CD8-positive, alpha-beta T cell (primary cell): ENCODE measurements at regions of chr1 and their contacts with region 1.

Region 1: GRCh38 chr1:207004981-207005830 is 27.4 kb downstream of the C1orf116 start:
- DNase-seq: peak in 7 of 9 experiments; percentile 9 to 58 (median 41)
- ATAC-seq: peak; percentile 51
- H3K4me3 ChIP-seq: no peak overlapping the region
- H3K4me3 Mint-ChIP-seq: no peak overlapping the region
- H3K27ac ChIP-seq: no peak overlapping the region
- H3K27ac Mint-ChIP-seq: no peak overlapping the region
- H3K4me1 ChIP-seq: no peaks in the 10 kb centered on the region
- H3K4me1 Mint-ChIP-seq: peaks cover 2% of the 10 kb centered on the region
- H3K27me3 ChIP-seq: no peaks in the 10 kb centered on the region
- H3K27me3 Mint-ChIP-seq: peaks cover 3% of the 10 kb centered on the region
- CTCF ChIP-seq: peak; percentile 63

Region 2: GRCh38 chr1:206706298-206706791 is 298.9 kb before region 1 on chr1:
- CTCF ChIA-PET with region 1: no interaction called
- POLR2A ChIA-PET with region 1: no interaction called
- intact Hi-C with region 1: no loop called
- DNase-seq: no peak
- ATAC-seq: no peak
- H3K4me3 ChIP-seq: no peak overlapping the region
- H3K4me3 Mint-ChIP-seq: no peak overlapping the region
- H3K27ac ChIP-seq: no peak overlapping the region
- H3K27ac Mint-ChIP-seq: peak overlapping the region; percentile 11
- H3K4me1 ChIP-seq: peaks cover 72% of the 10 kb centered on the region
- H3K4me1 Mint-ChIP-seq: peaks cover 85% of the 10 kb centered on the region
- H3K27me3 ChIP-seq: no peaks in the 10 kb centered on the region
- H3K27me3 Mint-ChIP-seq: no peaks in the 10 kb centered on the region
- CTCF ChIP-seq: no peak

Region 3: DNA sequence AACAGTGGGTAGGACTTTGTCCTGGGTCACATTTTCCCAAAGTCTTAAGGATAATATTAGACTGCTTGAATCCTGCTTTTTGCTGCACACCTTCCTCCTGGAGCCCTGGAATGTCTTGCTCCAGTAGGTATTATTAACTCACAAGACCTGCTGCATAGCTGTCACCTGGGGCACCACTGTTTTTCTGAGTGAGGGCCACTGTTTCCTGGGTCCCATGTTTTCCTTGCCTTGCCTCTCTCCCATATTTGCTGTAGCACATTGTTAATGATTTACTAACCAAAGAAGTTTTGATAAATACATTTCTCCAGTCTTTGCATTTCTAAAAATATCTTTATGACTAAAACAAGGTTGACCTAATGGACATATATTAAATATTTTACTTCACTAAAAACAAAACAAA is 12.4 kb before region 1 on chr1:
- CTCF ChIA-PET with region 1: interaction called, 13 read pairs
- POLR2A ChIA-PET with region 1: no interaction called
- intact Hi-C with region 1: no loop called
- DNase-seq: no peak
- ATAC-seq: no peak
- H3K4me3 ChIP-seq: no peak overlapping the region
- H3K4me3 Mint-ChIP-seq: no peak overlapping the region
- H3K27ac ChIP-seq: no peak overlapping the region
- H3K27ac Mint-ChIP-seq: no peak overlapping the region
- H3K4me1 ChIP-seq: no peaks in the 10 kb centered on the region
- H3K4me1 Mint-ChIP-seq: no peaks in the 10 kb centered on the region
- H3K27me3 ChIP-seq: peaks cover 0 to 5% of the 10 kb centered on the region in 2 experiments
- H3K27me3 Mint-ChIP-seq: peaks cover 19% of the 10 kb centered on the region
- CTCF ChIP-seq: no peak